ENCODE measurements at regions of chr17 and their contacts with region 1.

Region 1: GRCh38 chr17:55527540-55528118 is 16.4 kb upstream of the SMIM36 start:
- DNase-seq: peak; percentile 44
- H3K4me3 ChIP-seq: no peak overlapping the region
- H3K27ac ChIP-seq: no peak overlapping the region
- H3K27me3 ChIP-seq: no peaks in the 10 kb centered on the region
- CTCF ChIP-seq: peak; percentile 81

Region 2: DNA sequence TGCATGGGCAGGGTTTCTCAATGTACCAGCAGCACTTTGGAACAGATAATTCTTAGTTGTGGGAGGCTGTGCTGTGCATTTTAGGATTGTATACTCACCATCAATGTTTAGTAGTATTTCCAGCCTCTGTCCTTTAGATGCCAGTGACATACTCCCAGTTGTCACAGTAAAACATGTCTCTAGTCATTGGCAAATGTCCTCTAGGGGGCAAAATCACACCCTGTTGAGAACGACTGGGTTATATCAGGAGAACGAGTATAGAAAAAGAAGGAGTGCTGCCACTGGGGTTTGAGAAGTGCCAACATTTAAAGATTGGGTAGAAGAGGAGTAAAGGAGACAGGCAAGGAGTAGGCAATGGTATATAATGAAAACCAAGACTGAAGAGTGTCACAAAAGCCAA is 21.5 kb after region 1 on chr17:
- CTCF ChIA-PET with region 1: interaction called, 13 read pairs
- POLR2A ChIA-PET with region 1: no interaction called
- DNase-seq: no peak
- H3K4me3 ChIP-seq: no peak overlapping the region
- H3K27ac ChIP-seq: no peak overlapping the region
- H3K27me3 ChIP-seq: no peaks in the 10 kb centered on the region
- CTCF ChIP-seq: peak; percentile 40

Region 3: GRCh38 chr17:55601874-55602364 is 74.3 kb after region 1 on chr17:
- CTCF ChIA-PET with region 1: interaction called, 568 read pairs
- POLR2A ChIA-PET with region 1: no interaction called
- DNase-seq: no peak
- H3K4me3 ChIP-seq: no peak overlapping the region
- H3K27ac ChIP-seq: no peak overlapping the region
- H3K27me3 ChIP-seq: no peaks in the 10 kb centered on the region
- CTCF ChIP-seq: peak; percentile 93

Region 4: DNA sequence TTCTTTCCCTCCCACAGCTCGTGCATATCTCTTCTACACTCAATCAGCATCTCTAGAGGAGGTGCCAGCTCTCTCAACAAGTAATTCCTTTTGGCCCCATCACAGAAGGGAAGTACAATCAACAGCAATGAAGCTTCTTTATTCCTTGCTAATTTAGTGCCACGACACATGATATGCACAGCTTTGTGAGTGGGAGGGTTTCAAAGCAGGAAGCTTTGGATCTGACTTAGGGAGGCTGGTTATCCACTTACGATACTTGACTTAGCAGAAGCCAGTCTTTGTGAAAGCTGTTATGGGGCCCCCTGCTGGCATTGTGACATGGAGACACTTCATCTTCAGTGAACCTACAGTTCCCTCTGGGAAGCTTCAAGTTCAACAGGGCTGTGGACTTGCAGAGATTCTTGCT is 114.0 kb after region 1 on chr17:
- CTCF ChIA-PET with region 1: interaction called, 183 read pairs
- POLR2A ChIA-PET with region 1: no interaction called
- DNase-seq: peak; percentile 48
- H3K4me3 ChIP-seq: no peak overlapping the region
- H3K27ac ChIP-seq: no peak overlapping the region
- H3K27me3 ChIP-seq: peaks cover 5% of the 10 kb centered on the region
- CTCF ChIP-seq: peak; percentile 80

Region 5: GRCh38 chr17:55710829-55711496 is 183.3 kb after region 1 on chr17:
- CTCF ChIA-PET with region 1: interaction called, 33 read pairs
- POLR2A ChIA-PET with region 1: no interaction called
- DNase-seq: no peak
- H3K4me3 ChIP-seq: no peak overlapping the region
- H3K27ac ChIP-seq: no peak overlapping the region
- H3K27me3 ChIP-seq: no peaks in the 10 kb centered on the region
- CTCF ChIP-seq: no peak

Region 6: GRCh38 chr17:55750750-55751657 is 223.4 kb after region 1 on chr17 and contains the start of gene PCTP:
- CTCF ChIA-PET with region 1: interaction called, 17 read pairs
- POLR2A ChIA-PET with region 1: no interaction called
- DNase-seq: peak; percentile 68
- H3K4me3 ChIP-seq: peak within 1 kb of the TSS; percentile 89
- H3K27ac ChIP-seq: peak within 1 kb of the TSS; percentile 59
- H3K27me3 ChIP-seq: peaks cover 6% of the 10 kb centered on the region
- CTCF ChIP-seq: peak; percentile 57
- polyA plus RNA-seq, gene PCTP: 17.3 and 20.5 TPM in 2 replicates

Region 7: GRCh38 chr17:55783684-55784245 is 256.1 kb after region 1 on chr17:
- CTCF ChIA-PET with region 1: interaction called, 12 read pairs
- POLR2A ChIA-PET with region 1: no interaction called
- DNase-seq: no peak
- H3K4me3 ChIP-seq: no peak overlapping the region
- H3K27ac ChIP-seq: no peak overlapping the region
- H3K27me3 ChIP-seq: no peaks in the 10 kb centered on the region
- CTCF ChIP-seq: no peak

Measured in AG04450 (cell line).